Activated CD8-positive, alpha-beta T cell treated with anti-CD3 and anti-CD28 coated beads, Interleukin-2, amount 10 ng/mL, durations not matched to agents 7 days and 5 days (primary cell): ENCODE measurements at regions of chr9 and their contacts with region 1.

Region 1: DNA sequence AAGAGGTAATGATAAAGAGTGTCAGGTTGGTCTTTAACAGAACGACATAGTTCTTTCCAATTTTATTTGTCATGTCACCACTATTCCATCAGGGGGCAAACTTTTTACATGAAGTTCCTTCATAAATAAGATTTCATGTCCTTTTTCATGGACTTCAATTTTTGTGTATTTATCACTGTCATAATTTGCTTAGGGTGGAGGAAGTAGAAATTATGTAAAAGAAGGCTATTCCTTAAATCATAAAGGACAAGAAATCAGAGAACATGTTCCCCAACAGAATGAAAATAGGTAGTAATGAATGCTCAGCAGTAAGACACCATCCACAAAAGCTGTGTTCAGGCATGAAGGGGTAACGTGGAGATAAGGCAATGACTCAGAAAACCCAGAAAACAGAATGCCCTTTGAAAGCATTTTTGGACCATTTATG is 72.7 kb downstream of the ZFAND5 start:
- DNase-seq: no peak
- ATAC-seq: no peak
- H3K4me3 Mint-ChIP-seq: no peak overlapping the region
- H3K27ac Mint-ChIP-seq: no peak overlapping the region
- H3K4me1 Mint-ChIP-seq: no peaks in the 10 kb centered on the region
- H3K27me3 Mint-ChIP-seq: peaks cover 7% of the 10 kb centered on the region

Region 2: DNA sequence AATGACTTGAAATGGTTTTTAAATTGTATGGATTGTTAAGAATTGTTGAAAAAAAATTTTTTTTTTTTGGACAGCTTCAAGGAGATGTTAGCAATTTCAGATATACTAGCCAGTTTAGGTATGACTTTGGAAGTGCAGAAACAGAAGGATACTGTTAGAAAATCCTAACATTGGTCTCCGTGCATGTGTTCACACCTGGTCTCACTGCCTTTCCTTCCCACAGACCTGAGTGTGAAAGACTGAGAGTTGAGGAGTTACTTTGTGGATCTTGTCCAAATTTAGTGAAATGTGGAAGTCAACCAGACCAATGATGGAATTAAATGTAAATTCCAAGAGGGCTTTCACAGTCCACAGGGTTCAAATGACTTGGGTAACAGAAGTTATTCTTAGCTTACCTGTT is 40.7 kb before region 1 on chr9:
- CTCF ChIA-PET with region 1: no interaction called
- POLR2A ChIA-PET with region 1: no interaction called
- DNase-seq: no peak
- ATAC-seq: no peak
- H3K4me3 Mint-ChIP-seq: no peak overlapping the region
- H3K27ac Mint-ChIP-seq: no peak overlapping the region
- H3K4me1 Mint-ChIP-seq: no peaks in the 10 kb centered on the region
- H3K27me3 Mint-ChIP-seq: peaks cover 22% of the 10 kb centered on the region

Region 3: GRCh38 chr9:72592502-72593403 is 300.5 kb after region 1 on chr9:
- CTCF ChIA-PET with region 1: interaction called, 12 read pairs
- POLR2A ChIA-PET with region 1: no interaction called
- DNase-seq: peak; percentile 55
- ATAC-seq: peak; percentile 75
- H3K4me3 Mint-ChIP-seq: no peak overlapping the region
- H3K27ac Mint-ChIP-seq: no peak overlapping the region
- H3K4me1 Mint-ChIP-seq: peaks cover 31% of the 10 kb centered on the region
- H3K27me3 Mint-ChIP-seq: no peaks in the 10 kb centered on the region